ENCODE measurements at regions of chr13 and their contacts with region 1.

Region 1: DNA sequence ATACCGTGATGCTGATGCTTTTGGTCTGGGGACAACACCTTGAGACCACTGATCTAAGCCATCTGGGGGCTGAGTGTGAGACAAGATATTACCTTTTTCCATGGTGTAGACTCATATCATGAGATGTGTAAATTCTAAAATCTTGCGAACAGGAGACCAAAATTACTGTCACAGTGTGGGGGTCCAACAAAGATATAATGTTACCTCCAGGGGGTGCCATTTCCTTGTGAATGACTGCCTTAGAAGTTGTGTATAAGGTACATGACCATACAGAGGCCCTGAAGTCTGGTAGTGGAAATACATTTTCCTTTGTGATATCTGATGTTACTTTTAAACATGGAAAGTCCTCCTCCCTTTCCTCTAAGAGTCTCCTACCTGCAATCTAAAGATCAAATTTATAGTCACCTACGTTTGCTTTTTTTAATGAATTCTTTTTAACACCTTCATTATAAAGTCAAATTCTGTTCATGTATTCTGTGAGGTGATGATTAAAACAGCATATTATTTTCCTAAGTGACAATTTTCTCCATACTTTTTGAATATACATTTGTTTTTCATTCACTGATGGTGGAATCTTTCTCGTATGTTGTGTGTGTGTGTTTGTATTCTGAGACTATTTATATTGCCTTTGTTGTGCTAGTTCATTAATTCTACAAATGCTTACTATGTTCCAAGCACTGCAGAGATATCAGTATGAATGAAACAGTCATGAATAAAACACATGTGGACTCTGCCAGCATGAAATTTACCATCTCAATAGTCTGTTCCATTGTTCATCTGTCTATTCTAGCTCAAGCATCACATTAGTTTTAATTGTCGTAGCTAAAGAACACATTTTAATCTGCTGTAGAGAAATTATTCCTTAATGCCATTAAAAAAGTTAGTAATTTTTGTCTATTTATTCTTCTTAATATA is 113.7 kb downstream of the RFC3 start:
- DNase-seq: peak; percentile 44
- H3K4me3 Mint-ChIP-seq: no peak overlapping the region
- H3K27ac Mint-ChIP-seq: no peak overlapping the region
- H3K4me1 Mint-ChIP-seq: peaks cover 8% of the 10 kb centered on the region
- H3K27me3 Mint-ChIP-seq: no peaks in the 10 kb centered on the region
- CTCF ChIP-seq: peak; percentile 33

Region 2: DNA sequence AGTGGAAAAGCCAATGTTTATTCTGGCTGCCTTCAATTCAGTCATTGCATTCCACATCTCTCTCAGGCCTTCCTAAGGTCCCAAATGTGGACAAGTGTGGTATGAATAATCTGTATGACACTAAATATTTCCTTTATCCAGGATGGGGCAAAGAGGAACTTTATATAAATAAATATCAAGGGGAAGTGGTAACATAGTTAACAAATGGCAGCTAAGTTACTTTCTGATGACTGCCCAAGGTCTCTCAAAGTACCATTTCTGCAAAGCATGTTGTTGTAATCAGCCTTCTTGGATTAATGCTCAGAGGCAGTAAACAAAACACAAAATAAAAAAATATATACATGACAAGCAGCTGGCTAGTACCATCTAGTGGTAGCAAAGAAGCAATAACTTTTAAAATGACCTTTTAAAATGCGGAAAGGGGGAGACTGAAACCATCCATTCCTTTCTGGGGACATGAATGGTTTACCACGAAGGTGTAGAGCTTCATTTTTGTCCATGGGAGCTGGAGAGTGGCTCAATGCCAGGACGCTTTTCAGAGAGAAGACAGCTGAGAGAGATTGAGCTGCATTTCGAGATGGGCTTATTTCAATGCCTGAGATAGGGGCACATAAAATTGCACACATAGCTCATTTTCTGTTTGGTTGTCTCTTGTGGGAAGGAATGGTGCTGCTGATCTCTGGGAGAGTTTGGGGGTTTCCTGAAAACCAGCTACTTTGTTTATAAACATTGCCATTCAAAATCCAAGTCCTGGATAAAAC is 145.5 kb after region 1 on chr13:
- CTCF ChIA-PET with region 1: interaction called, 9 read pairs
- intact Hi-C with region 1: loop called (anchors 1 kb)
- DNase-seq: no peak
- H3K4me3 Mint-ChIP-seq: no peak overlapping the region
- H3K27ac Mint-ChIP-seq: peak overlapping the region; percentile 23
- H3K4me1 Mint-ChIP-seq: no peaks in the 10 kb centered on the region
- H3K27me3 Mint-ChIP-seq: no peaks in the 10 kb centered on the region
- CTCF ChIP-seq: peak; percentile 24

Region 3: GRCh38 chr13:35164324-35164932 is 1232.8 kb after region 1 on chr13:
- CTCF ChIA-PET with region 1: no interaction called
- intact Hi-C with region 1: loop called (anchors 2 kb)
- DNase-seq: no peak
- H3K4me3 Mint-ChIP-seq: no peak overlapping the region
- H3K27ac Mint-ChIP-seq: no peak overlapping the region
- H3K4me1 Mint-ChIP-seq: peaks cover 8% of the 10 kb centered on the region
- H3K27me3 Mint-ChIP-seq: no peaks in the 10 kb centered on the region
- CTCF ChIP-seq: no peak

Measured in Calu3 (cell line).